ENCODE measurements at regions of chr16 and their contacts with region 1.

Region 1: DNA sequence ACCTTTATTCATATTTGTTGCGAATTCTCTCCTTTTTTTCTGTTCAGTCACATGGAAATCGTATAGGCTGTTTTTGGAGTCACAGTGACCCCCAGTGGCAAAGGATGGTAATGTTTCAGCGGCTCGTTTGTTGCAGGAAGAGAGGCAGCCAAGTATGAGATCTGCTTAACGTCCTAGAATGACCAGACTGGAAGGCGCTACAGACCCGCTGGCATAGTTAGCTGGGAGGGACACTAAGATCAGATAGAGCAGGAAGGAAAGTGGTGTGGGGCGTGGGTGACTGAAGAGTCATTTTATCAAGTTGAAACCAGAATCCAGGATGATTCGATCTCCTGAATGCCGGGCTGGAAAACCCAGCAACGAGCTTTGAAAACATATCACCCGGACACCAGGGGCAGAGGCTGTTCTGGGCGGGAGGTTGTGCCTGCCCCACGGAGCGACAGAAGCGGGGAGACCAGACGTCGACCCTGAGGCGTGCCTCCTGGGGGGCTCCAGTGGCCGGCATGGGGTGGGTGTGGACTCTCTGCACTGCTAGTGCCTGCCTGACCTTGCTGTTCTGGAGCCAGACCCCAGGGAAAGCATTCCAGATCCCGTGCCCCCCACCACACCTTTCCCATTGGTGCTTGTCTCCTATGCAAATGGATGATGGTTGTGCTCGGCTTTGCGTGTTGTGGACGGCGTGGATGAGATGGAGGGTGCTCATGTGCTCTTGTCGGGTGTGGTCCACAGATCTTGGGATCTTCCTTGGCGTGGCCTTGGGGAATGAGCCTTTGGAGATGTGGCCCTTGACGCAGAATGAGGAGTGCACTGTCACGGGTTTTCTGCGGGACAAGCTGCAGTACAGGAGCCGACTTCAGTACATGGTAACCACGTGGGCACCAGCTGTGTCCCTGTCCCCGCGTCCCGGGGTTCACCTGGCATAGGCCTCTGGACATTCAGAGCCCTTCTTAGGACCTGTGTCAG is 7.7 kb downstream of the IL34 start:
- DNase-seq: peak; percentile 67
- ATAC-seq: peak; percentile 92
- H3K4me3 ChIP-seq: peak overlapping the region; percentile 27
- H3K27ac ChIP-seq: peak overlapping the region; percentile 51
- H3K4me1 ChIP-seq: peaks cover 7% of the 10 kb centered on the region
- H3K27me3 ChIP-seq: no peaks in the 10 kb centered on the region
- CTCF ChIP-seq: peak; percentile 90

Region 2: DNA sequence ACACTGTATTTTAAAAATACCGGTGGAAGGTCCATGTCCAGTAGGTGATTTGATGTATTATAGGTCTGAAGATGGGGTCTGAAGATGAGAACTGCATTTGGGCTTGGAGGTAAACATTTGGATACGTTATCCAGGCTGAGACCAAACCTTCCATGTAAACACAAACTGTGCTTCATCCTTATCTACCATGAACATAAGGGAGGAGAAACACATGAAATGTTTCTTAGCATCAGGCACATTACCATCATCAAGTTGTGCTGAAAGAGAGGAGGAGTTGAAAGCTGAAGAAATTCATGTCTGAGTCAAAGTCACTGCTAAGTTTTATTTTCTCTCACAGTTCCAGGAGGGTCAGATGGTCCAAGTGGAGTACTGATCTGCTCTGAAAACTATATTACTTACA is 119.1 kb before region 1 on chr16:
- intact Hi-C with region 1: loop called (anchors 10 kb)
- DNase-seq: no peak
- ATAC-seq: no peak
- H3K4me3 ChIP-seq: no peak overlapping the region
- H3K27ac ChIP-seq: no peak overlapping the region
- H3K4me1 ChIP-seq: no peaks in the 10 kb centered on the region
- H3K27me3 ChIP-seq: no peaks in the 10 kb centered on the region
- CTCF ChIP-seq: no peak

Region 3: DNA sequence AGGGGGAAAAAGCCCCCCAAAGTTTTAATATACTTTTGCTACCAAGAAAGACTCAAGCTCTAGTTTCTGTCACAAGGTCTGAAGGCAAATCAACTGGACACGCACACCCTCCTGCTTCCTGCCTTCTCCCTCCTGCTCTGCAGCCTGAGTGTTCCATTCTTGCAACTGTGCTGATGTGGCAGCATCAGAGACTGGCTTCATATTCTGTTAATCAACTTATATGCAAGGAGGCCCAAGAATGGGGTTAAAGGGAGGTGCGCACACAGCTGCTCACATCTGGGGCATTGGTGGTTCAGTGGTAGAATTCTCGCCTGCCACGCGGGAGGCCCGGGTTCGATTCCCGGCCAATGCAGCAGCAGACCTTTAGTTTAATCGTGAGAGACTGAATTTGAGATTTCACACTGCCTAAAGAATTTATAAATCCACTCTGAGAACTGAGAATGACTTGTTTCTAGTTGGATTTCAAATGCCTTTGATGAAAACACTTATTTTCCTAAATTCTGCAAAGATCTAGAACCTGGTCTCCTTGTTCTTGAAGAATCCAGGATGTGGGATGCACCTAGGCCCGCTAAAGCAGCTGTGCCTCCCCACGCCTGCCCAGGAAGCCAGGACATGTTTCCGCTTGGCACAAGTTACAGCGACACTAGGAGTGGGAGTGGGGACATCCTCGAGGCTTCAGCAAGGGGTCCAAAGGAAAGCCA is 135.3 kb after region 1 on chr16:
- intact Hi-C with region 1: no loop called
- DNase-seq: no peak
- ATAC-seq: no peak
- H3K4me3 ChIP-seq: no peak overlapping the region
- H3K27ac ChIP-seq: no peak overlapping the region
- H3K4me1 ChIP-seq: peaks cover 11% of the 10 kb centered on the region
- H3K27me3 ChIP-seq: no peaks in the 10 kb centered on the region
- CTCF ChIP-seq: no peak